ENCODE measurements at regions of chr1 and their contacts with region 1.

Region 1: GRCh38 chr1:181497870-181498269 is 14.6 kb downstream of the CACNA1E start:
- DNase-seq: no peak
- H3K4me3 ChIP-seq: no peak overlapping the region
- H3K27ac ChIP-seq: no peak overlapping the region
- H3K4me1 ChIP-seq: no peaks in the 10 kb centered on the region
- H3K27me3 ChIP-seq: no peaks in the 10 kb centered on the region
- CTCF ChIP-seq: no peak
- EP300 ChIP-seq: no peak
- POLR2A ChIP-seq: no peak

Region 2: DNA sequence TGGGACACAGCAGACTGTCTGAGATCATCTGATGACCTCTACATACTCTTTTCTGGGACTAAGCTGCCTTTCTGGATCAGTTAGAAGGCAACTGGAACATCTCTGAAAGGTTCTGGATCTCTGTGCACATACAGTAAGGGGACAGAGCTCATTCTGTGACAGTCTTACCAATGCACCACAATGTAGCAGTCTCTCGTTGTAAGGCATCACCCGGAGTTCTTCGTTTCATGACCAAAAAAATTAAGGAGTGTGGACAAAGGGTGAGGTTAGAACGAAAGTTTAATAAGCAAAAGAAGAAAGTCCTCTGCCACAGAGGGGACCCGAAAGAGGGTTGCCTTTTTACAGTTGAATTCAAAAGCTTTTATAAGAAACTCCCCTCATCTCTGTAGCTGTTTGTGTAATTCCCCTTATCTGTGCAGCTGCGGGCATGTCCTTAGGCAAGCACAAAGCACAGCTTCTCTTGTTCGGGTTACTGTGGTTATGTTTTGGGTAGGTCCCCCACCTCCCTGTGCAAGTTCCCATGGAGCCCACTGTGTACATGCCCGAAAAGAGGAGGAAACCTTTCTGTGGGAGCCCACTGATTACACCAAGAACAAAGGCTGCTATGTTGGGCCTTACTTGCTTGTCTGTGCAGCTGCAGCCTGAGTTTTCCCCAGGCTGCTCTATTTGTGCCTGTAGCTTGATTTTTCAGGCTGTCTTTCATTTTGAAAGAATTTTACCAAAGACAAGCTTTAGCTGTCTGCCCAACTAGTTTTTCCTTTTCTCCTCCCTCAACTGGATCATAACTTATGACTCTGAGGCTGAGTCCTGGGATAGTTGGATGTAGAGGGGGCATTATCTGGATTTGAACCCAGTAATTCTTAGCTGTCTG is 67.6 kb before region 1 on chr1:
- intact Hi-C with region 1: no loop called
- DNase-seq: no peak
- H3K4me3 ChIP-seq: no peak overlapping the region
- H3K27ac ChIP-seq: no peak overlapping the region
- H3K4me1 ChIP-seq: no peaks in the 10 kb centered on the region
- H3K27me3 ChIP-seq: no peaks in the 10 kb centered on the region
- CTCF ChIP-seq: no peak
- EP300 ChIP-seq: no peak
- POLR2A ChIP-seq: no peak

Region 3: GRCh38 chr1:181562395-181562794 is 64.5 kb after region 1 on chr1:
- intact Hi-C with region 1: loop called in 1 of 4 experiments (anchors 2 kb)
- DNase-seq: no peak
- H3K4me3 ChIP-seq: no peak overlapping the region
- H3K27ac ChIP-seq: no peak overlapping the region
- H3K4me1 ChIP-seq: no peaks in the 10 kb centered on the region
- H3K27me3 ChIP-seq: no peaks in the 10 kb centered on the region
- CTCF ChIP-seq: no peak
- EP300 ChIP-seq: no peak
- POLR2A ChIP-seq: no peak

Measured in ovary (tissue), 10 donors.